ENCODE measurements at regions of chr2 and their contacts with region 1.

Region 1: DNA sequence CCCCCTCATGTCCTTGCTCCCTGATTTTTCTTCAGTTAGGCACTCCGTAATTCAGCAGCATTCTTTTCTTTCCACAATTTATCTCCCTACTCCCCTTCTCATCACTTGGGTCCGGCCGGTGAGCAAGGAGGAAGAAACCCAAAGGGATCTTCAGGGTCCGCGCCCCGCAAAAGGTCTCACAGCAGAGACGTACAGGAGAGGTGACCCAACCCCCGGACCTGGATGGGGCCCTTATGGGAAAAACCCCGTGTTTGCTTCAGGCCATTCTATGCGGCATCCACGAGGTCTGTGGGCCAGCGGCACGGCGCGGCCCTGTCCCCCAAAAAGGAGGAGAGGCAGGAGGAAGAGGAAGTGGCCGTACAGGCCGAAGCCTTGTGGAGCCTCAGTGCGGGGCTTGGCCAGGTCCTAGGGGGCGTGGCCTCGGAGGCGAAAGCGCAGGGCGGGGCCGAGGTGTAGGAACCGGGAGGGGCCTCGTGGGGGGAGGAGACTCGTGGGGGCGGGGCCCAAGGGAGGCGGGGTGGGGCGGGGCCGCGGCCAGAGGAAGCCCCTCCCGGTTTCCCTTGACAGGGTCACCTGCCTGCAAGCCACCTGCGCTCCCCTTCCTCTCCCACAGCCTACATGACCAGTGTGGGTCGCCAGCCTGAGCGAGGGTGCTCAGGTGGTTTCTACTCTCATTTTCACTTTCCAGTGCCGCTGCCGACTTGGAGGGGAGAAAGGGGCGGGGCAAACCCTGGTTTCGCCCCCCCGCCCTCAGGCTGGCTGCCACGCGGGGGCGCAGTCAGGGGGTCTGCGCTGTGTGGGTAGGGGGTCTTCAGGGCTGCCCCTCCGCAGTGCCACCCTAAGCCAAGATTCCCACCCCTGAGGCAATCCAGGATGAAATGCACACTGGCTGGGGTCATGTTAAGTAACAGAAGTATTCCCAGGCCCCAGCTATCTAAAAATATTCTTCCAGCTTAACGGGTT is 156.4 kb upstream of the XPO1 start:
- DNase-seq: peak; percentile 74 to 97
- H3K4me3 ChIP-seq: peak overlapping the region; percentile 78
- H3K27ac ChIP-seq: peak overlapping the region; percentile 69
- H3K4me1 ChIP-seq: peaks cover 7% of the 10 kb centered on the region; the same call in 1 of the 2 replicates
- H3K27me3 ChIP-seq: no peaks in the 10 kb centered on the region
- CTCF ChIP-seq: peak; percentile 58

Region 2: GRCh38 chr2:61411109-61411508 is 283.5 kb before region 1 on chr2:
- CTCF ChIA-PET with region 1: no interaction called
- POLR2A ChIA-PET with region 1: no interaction called
- intact Hi-C with region 1: no loop called
- DNase-seq: no peak
- H3K4me3 ChIP-seq: no peak overlapping the region
- H3K27ac ChIP-seq: no peak overlapping the region
- H3K4me1 ChIP-seq: no peaks in the 10 kb centered on the region
- H3K27me3 ChIP-seq: no peaks in the 10 kb centered on the region
- CTCF ChIP-seq: no peak

Region 3: DNA sequence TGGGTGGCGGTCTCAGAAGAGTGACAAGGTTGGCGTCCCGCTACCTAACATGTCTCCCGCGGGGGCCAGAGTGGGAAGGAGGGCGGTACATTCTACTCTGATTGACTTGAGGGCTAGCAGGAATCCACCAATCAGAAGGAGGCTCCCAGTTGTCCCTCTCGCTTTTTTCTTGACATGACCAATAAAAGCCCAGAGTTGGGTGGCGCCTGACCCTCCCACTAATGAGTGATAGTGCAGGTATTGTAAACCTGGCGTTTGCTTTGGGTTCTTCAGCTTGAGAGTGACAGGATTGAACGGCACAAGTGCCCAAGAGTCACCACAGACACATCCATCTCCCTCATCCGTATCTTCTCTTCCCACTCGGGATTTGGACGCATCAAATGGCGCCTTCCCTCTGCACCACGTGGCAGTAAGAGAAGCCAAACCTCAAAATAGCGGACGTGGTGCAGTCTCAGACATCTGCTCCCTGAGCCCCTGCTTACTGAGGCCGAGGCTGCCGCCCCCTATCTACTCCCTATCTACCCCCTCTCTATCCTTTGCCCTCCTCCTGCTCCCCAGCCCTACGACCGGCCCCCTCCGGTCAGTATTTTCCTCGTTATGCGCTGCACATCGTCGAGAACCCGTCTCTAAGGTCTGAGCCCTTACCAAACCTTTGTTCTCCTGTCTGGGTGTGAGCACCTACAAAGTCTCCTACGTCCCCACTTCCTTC is 160.0 kb after region 1 on chr2:
- CTCF ChIA-PET with region 1: no interaction called
- POLR2A ChIA-PET with region 1: no interaction called
- intact Hi-C with region 1: loop called (anchors 1 kb)
- DNase-seq: peak; percentile 92 to 96
- H3K4me3 ChIP-seq: peak overlapping the region; percentile 86
- H3K27ac ChIP-seq: peak overlapping the region; percentile 49
- H3K4me1 ChIP-seq: peaks cover 14% of the 10 kb centered on the region
- H3K27me3 ChIP-seq: no peaks in the 10 kb centered on the region
- CTCF ChIP-seq: no peak; the same call in 1 of the 2 replicates